Sigmoid colon (tissue), 7 donors: ENCODE measurements at regions of chr1 and their contacts with region 1.

Region 1: DNA sequence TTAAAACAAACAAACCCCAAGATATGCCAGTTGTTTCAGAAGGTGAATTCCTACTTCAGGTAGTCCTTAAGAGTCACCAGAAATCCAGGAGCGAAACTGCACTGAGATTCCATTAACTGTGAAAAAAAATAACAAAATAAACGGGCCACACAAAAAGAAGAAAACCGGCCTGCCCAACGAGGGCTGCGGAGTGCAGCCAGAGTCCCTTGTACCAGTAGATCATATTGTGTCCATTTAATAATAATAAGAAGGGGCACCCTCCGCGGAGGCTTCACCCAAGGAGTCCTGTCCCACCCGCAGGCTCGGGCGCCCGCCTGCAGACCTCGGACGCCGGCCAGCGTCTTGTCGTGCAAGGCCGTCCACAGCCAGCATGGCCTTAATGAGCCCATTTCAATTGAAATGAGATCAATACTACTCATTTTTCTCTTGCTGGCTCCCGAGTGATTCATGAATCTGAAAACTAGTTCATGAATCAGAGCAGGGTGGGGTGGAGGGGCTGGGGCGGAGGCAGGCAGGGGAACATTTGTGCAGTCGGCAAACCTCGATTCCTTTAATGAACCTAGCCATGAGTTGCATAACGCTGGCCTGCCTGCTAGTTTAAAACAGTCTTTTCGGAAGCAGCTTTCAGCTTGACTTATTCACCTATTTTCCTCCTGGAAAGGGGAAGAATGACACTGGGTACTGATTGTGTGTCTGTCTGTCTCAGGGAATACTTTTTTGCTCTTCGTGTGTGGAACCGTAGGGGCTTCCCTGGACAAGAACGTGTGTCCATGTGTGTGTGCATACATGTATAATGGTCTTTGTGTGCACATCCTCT is 113.1 kb upstream of the IRF2BP2 start:
- DNase-seq: peak; percentile 93
- H3K4me3 ChIP-seq: peak overlapping the region in 2 of 4 donors; percentile 5 to 9
- H3K27ac ChIP-seq: peak overlapping the region; percentile 94 to 97 (median 96)
- H3K4me1 ChIP-seq: peaks cover 0 to 95% (median 89%) of the 10 kb centered on the region in 4 donors
- H3K27me3 ChIP-seq: no peaks in the 10 kb centered on the region
- CTCF ChIP-seq: no peak
- EP300 ChIP-seq: no peak
- POLR2A ChIP-seq: no peak

Region 2: GRCh38 chr1:234499119-234499942 is 223.8 kb before region 1 on chr1:
- intact Hi-C with region 1: loop called (anchors 1 kb)
- DNase-seq: peak; percentile 96
- H3K4me3 ChIP-seq: peak overlapping the region in 3 of 4 donors; percentile 20 to 34 (median 21)
- H3K27ac ChIP-seq: peak overlapping the region; percentile 80 to 89 (median 82)
- H3K4me1 ChIP-seq: peaks cover 0 to 38% (median 29%) of the 10 kb centered on the region in 4 donors
- H3K27me3 ChIP-seq: no peaks in the 10 kb centered on the region
- CTCF ChIP-seq: peak; percentile 94 to 97 (median 95)
- EP300 ChIP-seq: peak in 2 of 4 donors; percentile 56 to 57
- POLR2A ChIP-seq: peak in 1 of 2 donors; percentile 17

Region 3: DNA sequence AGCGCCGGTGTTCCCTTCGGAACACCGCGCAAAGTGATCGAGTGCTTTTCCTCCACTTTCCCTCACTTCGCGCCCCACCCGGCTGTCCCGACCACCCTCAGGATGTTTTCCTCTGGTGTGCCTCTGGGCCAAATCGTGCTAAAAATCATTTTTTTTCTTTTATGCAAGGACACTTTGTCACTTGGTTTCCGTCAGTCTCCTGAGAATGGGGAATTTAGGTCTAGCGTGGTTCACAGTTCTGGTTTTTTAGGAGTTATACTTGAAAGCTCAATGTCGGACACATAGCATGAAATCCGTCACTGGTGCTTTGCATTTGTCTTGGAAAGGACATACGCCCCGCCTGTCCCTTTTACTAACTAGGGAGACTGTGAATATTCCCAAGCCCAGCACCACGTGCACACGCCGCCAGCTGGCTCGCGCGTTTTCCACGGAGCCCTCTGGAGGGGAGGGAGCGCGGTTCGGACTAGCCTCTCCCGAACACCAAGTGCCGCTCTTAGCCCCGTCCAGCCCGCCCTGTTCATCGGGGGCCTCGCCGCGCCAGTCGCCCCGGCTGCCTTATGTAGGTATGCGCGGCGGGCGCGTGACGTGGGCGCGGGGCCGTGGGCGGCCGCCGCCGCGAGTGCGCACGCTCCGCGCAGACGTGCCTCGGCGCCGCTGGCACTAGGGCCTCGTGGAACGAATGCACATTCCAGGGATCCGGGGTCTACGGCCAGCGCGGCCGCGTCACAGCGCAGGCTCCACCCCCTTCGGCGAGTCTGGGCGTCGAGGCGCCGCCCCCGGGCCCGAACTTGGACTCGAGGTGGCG is 112.6 kb before region 1 on chr1:
- intact Hi-C with region 1: loop called (anchors 1 kb)
- DNase-seq: peak; percentile 98
- H3K4me3 ChIP-seq: peak overlapping the region; percentile 48 to 90 (median 58)
- H3K27ac ChIP-seq: peak overlapping the region; percentile 97 to 100 (median 100)
- H3K4me1 ChIP-seq: peaks cover 0 to 41% (median 33%) of the 10 kb centered on the region in 4 donors
- H3K27me3 ChIP-seq: no peaks in the 10 kb centered on the region
- CTCF ChIP-seq: peak in 1 of 4 experiments; percentile 6
- EP300 ChIP-seq: peak in 2 of 4 donors; percentile 34 to 90
- POLR2A ChIP-seq: peak; percentile 85 to 89

Region 4: GRCh38 chr1:234656856-234657654 is 66.1 kb before region 1 on chr1:
- intact Hi-C with region 1: no loop called
- DNase-seq: no peak
- H3K4me3 ChIP-seq: no peak overlapping the region
- H3K27ac ChIP-seq: no peak overlapping the region
- H3K4me1 ChIP-seq: peaks cover 0 to 5% (median 1%) of the 10 kb centered on the region in 4 donors
- H3K27me3 ChIP-seq: no peaks in the 10 kb centered on the region
- CTCF ChIP-seq: no peak
- EP300 ChIP-seq: no peak
- POLR2A ChIP-seq: no peak

Region 5: DNA sequence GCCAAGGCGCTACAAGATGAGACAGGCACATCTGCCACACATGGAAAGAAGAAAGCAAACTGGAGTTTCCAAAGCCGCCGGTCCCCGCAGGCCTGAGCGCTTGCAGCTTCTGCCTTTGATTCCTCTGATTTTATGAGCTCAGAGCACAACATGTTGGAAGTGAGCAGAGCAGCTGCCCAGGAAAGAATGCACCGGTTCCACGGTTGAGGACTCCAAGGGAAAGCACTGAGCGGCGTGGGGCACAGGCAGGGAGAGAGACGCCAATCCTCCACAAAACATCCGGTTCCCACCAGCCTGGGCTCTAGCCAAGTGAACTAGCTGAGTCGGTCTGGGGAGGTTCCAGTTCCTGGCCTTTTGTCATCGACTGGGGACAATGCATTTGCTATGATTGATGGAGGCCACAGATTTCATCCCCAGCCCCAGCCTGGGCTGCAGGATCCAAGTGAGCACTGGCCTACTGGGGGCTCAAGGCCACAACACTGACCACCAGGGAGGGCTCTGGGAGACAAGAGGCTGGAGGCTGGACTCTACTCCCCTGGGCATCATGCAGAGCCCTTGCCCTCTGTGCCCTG is 139.9 kb after region 1 on chr1:
- intact Hi-C with region 1: loop called (anchors 1 kb)
- DNase-seq: peak; percentile 92
- H3K4me3 ChIP-seq: no peak overlapping the region
- H3K27ac ChIP-seq: peak overlapping the region; percentile 66 to 83 (median 80)
- H3K4me1 ChIP-seq: peaks cover 0 to 42% (median 32%) of the 10 kb centered on the region in 4 donors
- H3K27me3 ChIP-seq: no peaks in the 10 kb centered on the region
- CTCF ChIP-seq: no peak
- EP300 ChIP-seq: peak in 1 of 4 donors; percentile 16
- POLR2A ChIP-seq: no peak

Region 6: DNA sequence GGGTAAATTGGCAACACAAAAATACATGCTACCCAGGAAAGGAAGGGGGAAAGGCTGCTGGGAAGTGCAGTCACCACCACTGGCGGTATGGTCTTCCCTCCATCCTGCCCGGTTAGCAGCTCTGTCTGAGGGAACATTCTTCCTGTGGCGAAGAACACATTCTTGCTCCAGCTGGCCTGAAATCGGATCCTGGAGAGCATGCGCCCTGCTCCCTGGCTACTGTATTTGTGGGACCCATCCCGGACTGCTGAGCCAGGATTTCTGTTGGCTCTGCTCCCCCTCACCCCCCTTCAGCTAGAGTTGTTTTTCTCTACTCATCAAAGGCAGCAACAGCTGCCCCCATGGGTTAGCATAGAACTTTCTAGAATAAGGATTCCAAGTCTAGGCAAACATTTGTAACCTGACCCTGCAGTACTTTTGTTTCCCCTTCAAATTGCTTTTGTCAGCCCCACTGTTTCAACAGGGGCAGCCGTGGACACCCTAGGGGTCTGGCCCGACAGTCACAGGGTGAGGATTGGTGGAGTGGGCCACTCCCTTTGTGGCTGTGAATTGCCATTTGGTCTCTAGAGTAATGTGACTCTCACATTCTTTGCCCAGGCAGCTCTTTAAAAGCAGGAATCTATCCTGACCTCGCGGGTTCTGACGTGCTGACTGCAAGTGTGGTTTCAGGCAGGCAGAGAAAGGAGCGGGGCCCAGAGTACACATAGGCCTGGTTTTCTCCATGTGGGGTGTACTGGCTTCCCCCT is 247.8 kb after region 1 on chr1:
- intact Hi-C with region 1: loop called (anchors 5 kb)
- DNase-seq: peak; percentile 95
- H3K4me3 ChIP-seq: peak overlapping the region in 2 of 4 donors; percentile 43 to 44
- H3K27ac ChIP-seq: peak overlapping the region; percentile 75 to 90 (median 81)
- H3K4me1 ChIP-seq: peaks cover 0 to 65% (median 61%) of the 10 kb centered on the region in 4 donors
- H3K27me3 ChIP-seq: no peaks in the 10 kb centered on the region
- CTCF ChIP-seq: no peak
- EP300 ChIP-seq: peak in 1 of 4 donors; percentile 0
- POLR2A ChIP-seq: peak in 1 of 2 donors; percentile 18

Region 7: DNA sequence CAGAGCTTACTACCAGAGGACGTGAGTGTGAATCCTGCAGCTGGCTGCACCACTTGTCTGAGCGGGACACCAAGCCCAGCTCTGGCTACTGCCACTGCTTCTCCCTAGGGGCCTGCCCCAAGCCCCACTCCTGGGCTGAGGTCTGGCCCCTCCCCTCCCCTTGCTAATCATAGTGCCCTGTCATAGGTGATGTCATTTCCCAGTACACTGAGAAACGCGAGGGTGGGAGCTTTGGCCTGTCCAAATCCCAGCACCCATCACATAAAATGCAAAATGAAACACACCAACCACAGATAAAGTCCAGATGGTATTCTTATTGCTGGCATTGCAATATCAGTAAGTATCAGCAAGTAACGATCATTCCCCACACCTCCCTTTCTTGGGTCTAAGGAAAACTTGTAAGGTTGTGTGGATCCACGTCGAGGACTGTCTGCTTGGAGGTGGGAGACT is 327.8 kb after region 1 on chr1:
- intact Hi-C with region 1: loop called (anchors 2 kb)
- DNase-seq: no peak
- H3K4me3 ChIP-seq: no peak overlapping the region
- H3K27ac ChIP-seq: peak overlapping the region in 1 of 4 donors; percentile 89
- H3K4me1 ChIP-seq: peaks cover 0 to 44% (median 36%) of the 10 kb centered on the region in 4 donors
- H3K27me3 ChIP-seq: no peaks in the 10 kb centered on the region
- CTCF ChIP-seq: no peak
- EP300 ChIP-seq: peak in 1 of 4 donors; percentile 43
- POLR2A ChIP-seq: no peak

Region 8: GRCh38 chr1:236064674-236065508 is 1341.8 kb after region 1 on chr1 and contains the start of gene NID1:
- intact Hi-C with region 1: loop called (anchors 10 kb)
- DNase-seq: peak; percentile 98
- H3K4me3 ChIP-seq: peak within 1 kb of the TSS; percentile 82 to 94 (median 90)
- H3K27ac ChIP-seq: peak within 1 kb of the TSS; percentile 97 to 100 (median 100)
- H3K4me1 ChIP-seq: peaks cover 0 to 65% (median 58%) of the 10 kb centered on the region in 4 donors
- H3K27me3 ChIP-seq: no peaks in the 10 kb centered on the region
- CTCF ChIP-seq: peak in 2 of 4 experiments; percentile 31 to 38
- EP300 ChIP-seq: peak in 3 of 4 donors; percentile 40 to 85 (median 61)
- POLR2A ChIP-seq: peak; percentile 85 to 86
- total RNA-seq, gene NID1: 136 to 242 (median 145) TPM